Calu3 (cell line): ENCODE measurements at regions of chr2 and their contacts with region 1.

Region 1: GRCh38 chr2:112869258-112869885 is 32.8 kb upstream of the IL1B start:
- DNase-seq: peak; percentile 96
- H3K4me3 Mint-ChIP-seq: peak overlapping the region; percentile 26
- H3K27ac Mint-ChIP-seq: peak overlapping the region; percentile 84
- H3K4me1 Mint-ChIP-seq: peaks cover 53% of the 10 kb centered on the region
- H3K27me3 Mint-ChIP-seq: no peaks in the 10 kb centered on the region
- CTCF ChIP-seq: no peak

Region 2: GRCh38 chr2:112519506-112519905 is 349.9 kb before region 1 on chr2:
- CTCF ChIA-PET with region 1: no interaction called
- intact Hi-C with region 1: no loop called
- DNase-seq: no peak
- H3K4me3 Mint-ChIP-seq: no peak overlapping the region
- H3K27ac Mint-ChIP-seq: no peak overlapping the region
- H3K4me1 Mint-ChIP-seq: no peaks in the 10 kb centered on the region
- H3K27me3 Mint-ChIP-seq: no peaks in the 10 kb centered on the region
- CTCF ChIP-seq: no peak

Region 3: GRCh38 chr2:112811841-112812306 is 57.5 kb before region 1 on chr2:
- CTCF ChIA-PET with region 1: no interaction called
- intact Hi-C with region 1: loop called (anchors 5 kb)
- DNase-seq: peak; percentile 73
- H3K4me3 Mint-ChIP-seq: peak overlapping the region; percentile 10
- H3K27ac Mint-ChIP-seq: peak overlapping the region; percentile 89
- H3K4me1 Mint-ChIP-seq: peaks cover 70% of the 10 kb centered on the region
- H3K27me3 Mint-ChIP-seq: no peaks in the 10 kb centered on the region
- CTCF ChIP-seq: no peak

Region 4: DNA sequence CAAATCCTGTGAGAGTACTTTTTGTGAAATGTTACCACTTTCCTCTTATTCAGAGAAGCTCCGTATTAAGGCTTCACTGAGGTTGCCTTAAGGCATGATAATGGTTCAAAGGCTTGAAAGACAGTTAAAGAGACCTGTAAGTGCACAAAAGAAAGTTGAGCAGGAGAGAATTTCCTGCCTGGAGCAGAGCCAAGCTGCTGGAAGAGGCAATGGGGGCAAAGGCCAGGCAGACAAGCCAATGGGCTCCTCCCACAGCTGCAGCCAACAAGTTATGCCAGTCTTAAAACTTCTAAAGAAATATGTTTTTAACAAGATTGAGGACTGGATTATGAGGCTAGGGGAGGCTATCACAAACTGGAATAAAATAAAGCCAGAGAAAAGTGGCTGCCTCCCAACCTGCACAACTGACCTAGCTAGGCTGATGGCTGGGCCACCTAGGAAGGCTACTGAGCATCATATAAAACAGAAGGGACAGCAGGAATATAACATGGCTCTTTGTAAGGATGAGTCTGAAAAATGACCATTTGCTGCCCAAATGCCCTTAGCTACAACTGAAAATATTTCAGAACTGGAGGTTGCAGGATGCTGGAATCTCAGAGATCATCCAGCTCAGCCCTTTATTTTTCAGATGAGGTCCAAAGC is 34.9 kb before region 1 on chr2:
- CTCF ChIA-PET with region 1: no interaction called
- intact Hi-C with region 1: loop called (anchors 5 kb)
- DNase-seq: peak; percentile 78
- H3K4me3 Mint-ChIP-seq: peak overlapping the region; percentile 7
- H3K27ac Mint-ChIP-seq: peak overlapping the region; percentile 35
- H3K4me1 Mint-ChIP-seq: peaks cover 70% of the 10 kb centered on the region
- H3K27me3 Mint-ChIP-seq: no peaks in the 10 kb centered on the region
- CTCF ChIP-seq: no peak

Region 5: DNA sequence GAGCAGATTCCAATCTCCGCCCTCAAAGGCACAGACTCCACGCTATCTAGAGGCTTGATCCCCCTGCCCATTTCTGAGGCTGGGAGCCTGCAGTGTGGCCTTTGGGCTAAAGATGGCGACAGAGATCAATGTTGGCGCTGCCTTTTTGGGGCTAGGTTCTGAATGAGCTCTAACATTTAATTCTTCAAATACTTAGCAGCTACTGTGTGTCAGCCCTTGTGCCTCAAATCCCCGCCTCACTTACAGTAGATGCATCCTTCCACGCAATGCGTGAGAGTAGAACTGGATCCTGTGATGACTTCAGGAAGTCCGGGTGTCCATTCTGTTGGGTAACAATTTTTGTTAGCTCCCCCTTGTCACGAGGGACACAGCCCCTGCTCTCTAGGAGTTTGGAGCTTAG is 210.8 kb after region 1 on chr2:
- CTCF ChIA-PET with region 1: no interaction called
- intact Hi-C with region 1: no loop called
- DNase-seq: peak; percentile 77
- H3K4me3 Mint-ChIP-seq: no peak overlapping the region
- H3K27ac Mint-ChIP-seq: peak overlapping the region; percentile 95
- H3K4me1 Mint-ChIP-seq: peaks cover 54% of the 10 kb centered on the region
- H3K27me3 Mint-ChIP-seq: no peaks in the 10 kb centered on the region
- CTCF ChIP-seq: peak; percentile 75

Region 6: DNA sequence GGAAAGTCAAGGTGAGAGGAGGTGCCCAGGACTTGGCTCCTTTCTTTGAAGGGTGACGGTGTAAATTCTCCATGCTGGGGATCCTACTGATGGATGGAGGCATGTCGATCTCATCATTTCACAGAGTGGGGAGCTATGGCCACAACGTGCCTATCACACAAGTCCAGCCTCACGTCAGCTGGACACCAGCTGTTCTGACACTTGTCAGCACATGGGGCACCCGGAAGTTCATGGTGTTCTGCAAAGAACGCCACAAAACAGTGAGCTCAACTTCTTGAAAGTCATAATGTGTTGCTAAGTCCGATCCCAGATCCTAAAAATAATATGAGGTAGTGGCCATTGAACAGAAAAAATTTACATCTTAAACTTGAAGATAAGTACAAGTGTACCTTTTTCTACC is 397.1 kb after region 1 on chr2:
- CTCF ChIA-PET with region 1: no interaction called
- intact Hi-C with region 1: no loop called
- DNase-seq: no peak
- H3K4me3 Mint-ChIP-seq: no peak overlapping the region
- H3K27ac Mint-ChIP-seq: peak overlapping the region; percentile 29
- H3K4me1 Mint-ChIP-seq: no peaks in the 10 kb centered on the region
- H3K27me3 Mint-ChIP-seq: no peaks in the 10 kb centered on the region
- CTCF ChIP-seq: no peak